ENCODE measurements at regions of chr1 and their contacts with region 1.

Region 1: GRCh38 chr1:159780583-159781582 is at the start of gene DUSP23:
- DNase-seq: peak; percentile 100
- H3K4me3 ChIP-seq: peak within 1 kb of the TSS; percentile 35 to 80 (median 62)
- H3K27ac ChIP-seq: peak within 1 kb of the TSS; percentile 92
- H3K4me1 ChIP-seq: peaks cover 46% of the 10 kb centered on the region
- H3K27me3 ChIP-seq: no peaks in the 10 kb centered on the region
- CTCF ChIP-seq: peak; percentile 90 to 97
- POLR2A ChIP-seq: peak; percentile 10
- total RNA-seq, gene DUSP23: 82.5 and 126 TPM in 2 replicates

Region 2: GRCh38 chr1:159315381-159315780 is 465.5 kb before region 1 on chr1:
- CTCF ChIA-PET with region 1: interaction called, 3 read pairs
- POLR2A ChIA-PET with region 1: no interaction called
- dilution Hi-C with region 1: no loop called
- intact Hi-C with region 1: loop called (anchors 2 kb)
- DNase-seq: no peak
- H3K4me3 ChIP-seq: no peak overlapping the region
- H3K27ac ChIP-seq: no peak overlapping the region
- H3K4me1 ChIP-seq: peaks cover 16% of the 10 kb centered on the region
- H3K27me3 ChIP-seq: no peaks in the 10 kb centered on the region
- CTCF ChIP-seq: no peak
- POLR2A ChIP-seq: no peak

Region 3: GRCh38 chr1:159469921-159470533 is 310.9 kb before region 1 on chr1:
- CTCF ChIA-PET with region 1: interaction called, 7 read pairs
- POLR2A ChIA-PET with region 1: no interaction called
- dilution Hi-C with region 1: loop called (anchors 25 kb)
- intact Hi-C with region 1: loop called (anchors 1 kb)
- DNase-seq: peak; percentile 79
- H3K4me3 ChIP-seq: no peak overlapping the region
- H3K27ac ChIP-seq: peak overlapping the region; percentile 78
- H3K4me1 ChIP-seq: peaks cover 50% of the 10 kb centered on the region
- H3K27me3 ChIP-seq: no peaks in the 10 kb centered on the region
- CTCF ChIP-seq: no peak
- POLR2A ChIP-seq: peak; percentile 25

Region 4: DNA sequence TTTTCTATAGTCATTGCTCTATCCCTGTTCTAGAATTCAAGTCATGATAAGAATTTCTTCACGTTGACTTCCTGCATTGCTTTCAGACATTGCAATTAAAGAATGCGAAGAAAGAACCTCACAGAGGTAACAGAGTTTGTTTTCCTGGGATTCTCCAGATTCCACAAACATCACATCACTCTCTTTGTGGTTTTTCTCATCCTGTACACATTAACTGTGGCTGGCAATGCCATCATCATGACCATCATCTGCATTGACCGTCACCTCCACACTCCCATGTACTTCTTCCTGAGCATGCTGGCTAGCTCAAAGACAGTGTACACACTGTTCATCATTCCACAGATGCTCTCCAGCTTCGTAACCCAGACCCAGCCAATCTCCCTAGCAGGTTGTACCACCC is 182.7 kb before region 1 on chr1:
- CTCF ChIA-PET with region 1: interaction called, 5 read pairs
- POLR2A ChIA-PET with region 1: no interaction called
- dilution Hi-C with region 1: no loop called
- intact Hi-C with region 1: loop called (anchors 1 kb)
- DNase-seq: peak; percentile 72
- H3K4me3 ChIP-seq: no peak overlapping the region
- H3K27ac ChIP-seq: peak overlapping the region; percentile 99
- H3K4me1 ChIP-seq: peaks cover 40% of the 10 kb centered on the region
- H3K27me3 ChIP-seq: no peaks in the 10 kb centered on the region
- CTCF ChIP-seq: no peak
- POLR2A ChIP-seq: peak; percentile 45

Region 5: DNA sequence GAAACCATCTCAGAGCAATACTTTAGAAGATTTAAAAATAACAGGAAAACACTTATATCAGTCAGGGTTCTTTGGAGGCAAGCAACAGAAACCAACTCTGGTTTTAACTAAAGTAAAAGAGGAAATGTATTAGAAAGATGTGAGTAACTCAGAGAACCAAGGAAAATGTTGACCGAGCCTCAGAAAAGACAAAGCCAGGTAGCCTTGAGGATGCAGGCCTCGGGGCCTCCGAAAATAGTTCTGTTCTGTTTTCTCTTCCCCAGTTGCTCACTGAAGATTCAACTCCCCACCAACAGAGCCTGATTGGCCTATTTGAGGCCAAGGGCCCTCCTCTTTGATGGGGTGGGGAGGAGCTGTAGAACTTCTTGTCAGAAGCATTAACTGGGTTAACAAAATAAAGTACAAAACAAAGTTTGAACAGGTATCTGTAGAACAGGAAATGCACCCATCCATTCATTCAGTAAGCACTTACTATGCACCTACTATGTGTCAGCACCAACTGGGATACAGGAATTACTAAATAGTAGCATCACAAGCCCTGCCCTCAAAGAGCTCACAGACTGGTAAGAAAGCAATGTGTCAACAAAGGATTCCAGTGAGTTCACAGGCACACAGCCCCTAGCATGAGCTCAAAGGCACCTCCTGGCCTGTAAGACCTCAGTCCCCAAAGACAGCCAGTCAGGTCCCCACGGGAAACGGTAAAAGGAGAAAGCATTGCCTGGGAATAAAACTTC is 58.4 kb after region 1 on chr1:
- CTCF ChIA-PET with region 1: no interaction called
- POLR2A ChIA-PET with region 1: no interaction called
- dilution Hi-C with region 1: no loop called
- intact Hi-C with region 1: no loop called
- DNase-seq: no peak
- H3K4me3 ChIP-seq: no peak overlapping the region
- H3K27ac ChIP-seq: no peak overlapping the region
- H3K4me1 ChIP-seq: no peaks in the 10 kb centered on the region
- H3K27me3 ChIP-seq: no peaks in the 10 kb centered on the region
- CTCF ChIP-seq: no peak
- POLR2A ChIP-seq: no peak

Region 6: DNA sequence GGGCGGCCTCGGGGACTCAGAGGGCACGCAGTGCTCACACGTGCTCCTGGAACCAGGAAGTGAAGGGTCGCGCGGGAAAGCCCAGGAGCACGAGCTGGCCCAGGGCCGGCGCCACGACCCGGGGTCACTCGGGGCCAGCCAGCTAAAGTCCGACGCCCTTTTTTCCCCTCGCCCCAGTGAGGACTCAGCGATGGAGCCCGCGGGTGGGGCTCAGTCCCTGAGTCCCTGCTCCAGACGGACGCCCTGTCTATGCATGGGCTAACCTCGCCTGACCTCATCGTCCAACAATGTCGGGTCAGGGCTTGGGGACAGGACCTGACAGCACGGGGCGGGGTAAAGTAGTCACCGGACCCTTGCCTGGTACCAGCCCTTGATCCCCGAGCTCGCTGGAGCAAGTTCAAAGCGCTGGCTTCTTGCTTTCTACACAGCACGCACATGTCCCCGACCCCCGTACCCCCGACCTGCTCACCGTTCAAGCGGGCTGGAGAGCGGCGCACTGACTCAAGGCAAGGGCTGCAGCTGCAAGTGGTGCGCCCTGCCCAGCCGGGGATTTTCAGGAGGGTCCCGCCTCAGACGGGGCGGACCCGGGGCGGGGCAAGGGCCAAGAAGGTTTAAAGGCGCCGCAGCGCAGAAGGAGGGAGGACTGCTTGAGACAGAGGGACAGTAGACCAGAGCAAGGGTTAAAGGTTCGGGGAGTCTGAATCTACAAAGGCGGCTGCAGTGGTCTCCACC is 144.3 kb after region 1 on chr1 and contains the start of gene TAGLN2:
- CTCF ChIA-PET with region 1: interaction called, 5 read pairs
- POLR2A ChIA-PET with region 1: interaction called, 3 read pairs
- dilution Hi-C with region 1: no loop called
- intact Hi-C with region 1: loop called (anchors 1 kb)
- DNase-seq: peak; percentile 93
- H3K4me3 ChIP-seq: peak within 1 kb of the TSS; percentile 46 to 78 (median 71)
- H3K27ac ChIP-seq: peak within 1 kb of the TSS; percentile 98
- H3K4me1 ChIP-seq: peaks cover 27% of the 10 kb centered on the region
- H3K27me3 ChIP-seq: no peaks in the 10 kb centered on the region
- CTCF ChIP-seq: no peak
- POLR2A ChIP-seq: peak; percentile 98
- total RNA-seq, gene TAGLN2: 646 and 750 TPM in 2 replicates

Measured in endothelial cell of umbilical vein (primary cell).